Dendritic cell treated with granulocyte-macrophage colony-stimulating factor and Interleukin-4, amounts not matched to agents 40 ng/mL and 50 ng/mL, for 4 days (primary cell): ENCODE measurements at regions of chr1 and their contacts with region 1.

Region 1: DNA sequence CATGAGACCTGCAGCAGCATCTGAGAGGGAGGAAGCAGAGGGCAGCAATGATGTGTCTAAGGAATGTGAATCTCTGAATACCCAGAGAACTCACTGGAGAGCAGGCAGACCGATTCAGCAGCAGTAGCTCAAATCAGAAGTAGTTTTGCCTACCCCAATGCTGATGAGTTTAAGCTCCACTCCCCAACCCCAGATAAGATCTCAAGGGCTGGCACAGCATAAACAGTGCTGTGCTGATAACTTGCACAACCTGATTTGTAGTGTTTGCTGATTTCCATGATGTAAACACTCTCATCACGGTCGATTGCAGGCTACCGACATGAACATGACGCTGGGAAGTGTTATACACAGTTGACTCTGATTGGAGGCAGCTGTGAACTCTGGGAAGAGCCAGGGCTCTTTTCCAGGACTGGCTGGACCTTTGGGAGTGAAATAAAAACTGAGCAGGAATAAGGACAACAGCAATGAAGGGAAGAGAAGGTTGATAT is 11.2 kb upstream of the HMGCS2 start:
- H3K4me3 Mint-ChIP-seq: no peak overlapping the region
- H3K27ac Mint-ChIP-seq: no peak overlapping the region
- H3K4me1 Mint-ChIP-seq: peaks cover 27% of the 10 kb centered on the region
- H3K27me3 Mint-ChIP-seq: no peaks in the 10 kb centered on the region

Region 2: GRCh38 chr1:119711804-119712341 is 68.0 kb before region 1 on chr1 and contains the start of gene PHGDH:
- intact Hi-C with region 1: loop called (anchors 10 kb)
- H3K4me3 Mint-ChIP-seq: peak within 1 kb of the TSS; percentile 78
- H3K27ac Mint-ChIP-seq: peak within 1 kb of the TSS; percentile 47
- H3K4me1 Mint-ChIP-seq: peaks cover 36% of the 10 kb centered on the region
- H3K27me3 Mint-ChIP-seq: peaks cover 26% of the 10 kb centered on the region